Endothelial cell of umbilical vein (primary cell): ENCODE measurements at regions of chr19 and their contacts with region 1.

Region 1: GRCh38 chr19:46299004-46299509 is 2.2 kb downstream of the HIF3A start:
- DNase-seq: peak; percentile 95
- H3K4me3 ChIP-seq: no peak overlapping the region
- H3K27ac ChIP-seq: peak overlapping the region; percentile 25
- H3K4me1 ChIP-seq: peaks cover 38% of the 10 kb centered on the region
- H3K27me3 ChIP-seq: peaks cover 0 to 13% of the 10 kb centered on the region in 2 experiments
- CTCF ChIP-seq: no peak
- POLR2A ChIP-seq: no peak

Region 2: DNA sequence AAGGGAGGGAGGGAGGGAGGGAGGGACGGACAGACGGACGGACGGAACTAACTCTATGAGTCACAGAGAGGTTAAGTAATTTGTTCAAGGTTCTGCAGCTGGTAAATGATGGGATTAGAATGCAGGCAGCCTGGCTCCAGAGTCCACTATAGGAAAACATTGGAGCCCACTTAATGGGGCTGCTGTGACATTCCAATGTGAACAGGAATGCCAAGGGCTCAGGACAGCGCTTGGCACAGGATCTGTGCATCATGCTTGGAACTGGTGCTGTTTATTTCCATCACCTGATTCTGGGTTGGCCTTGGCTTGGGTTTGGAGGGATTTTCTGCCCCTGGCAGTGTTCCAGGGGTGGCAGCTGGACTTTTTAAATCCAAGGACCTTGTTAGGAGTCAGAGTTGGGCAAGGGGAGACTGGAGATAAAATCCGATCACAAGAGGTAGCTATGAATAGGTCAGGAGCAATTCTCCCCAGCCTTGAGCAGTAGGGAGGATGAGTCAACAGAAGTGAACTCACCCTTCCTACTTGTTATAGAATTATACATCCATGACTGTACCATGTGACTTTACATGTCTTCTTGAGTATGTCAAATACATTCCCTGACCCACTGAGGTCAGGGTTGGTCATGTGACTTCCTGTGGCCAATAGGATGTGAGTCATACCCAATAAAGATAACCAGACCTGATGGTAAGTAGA is 10.0 kb before region 1 on chr19:
- CTCF ChIA-PET with region 1: interaction called, 119 read pairs
- POLR2A ChIA-PET with region 1: interaction called, 5 read pairs
- dilution Hi-C with region 1: no loop called
- intact Hi-C with region 1: loop called (anchors 1 kb)
- DNase-seq: peak; percentile 95
- H3K4me3 ChIP-seq: no peak overlapping the region
- H3K27ac ChIP-seq: peak overlapping the region; percentile 95
- H3K4me1 ChIP-seq: peaks cover 16% of the 10 kb centered on the region
- H3K27me3 ChIP-seq: no peaks in the 10 kb centered on the region
- CTCF ChIP-seq: no peak
- POLR2A ChIP-seq: no peak